Mammary epithelial cell (primary cell): ENCODE measurements at regions of chr3 and their contacts with region 1.

Region 1: DNA sequence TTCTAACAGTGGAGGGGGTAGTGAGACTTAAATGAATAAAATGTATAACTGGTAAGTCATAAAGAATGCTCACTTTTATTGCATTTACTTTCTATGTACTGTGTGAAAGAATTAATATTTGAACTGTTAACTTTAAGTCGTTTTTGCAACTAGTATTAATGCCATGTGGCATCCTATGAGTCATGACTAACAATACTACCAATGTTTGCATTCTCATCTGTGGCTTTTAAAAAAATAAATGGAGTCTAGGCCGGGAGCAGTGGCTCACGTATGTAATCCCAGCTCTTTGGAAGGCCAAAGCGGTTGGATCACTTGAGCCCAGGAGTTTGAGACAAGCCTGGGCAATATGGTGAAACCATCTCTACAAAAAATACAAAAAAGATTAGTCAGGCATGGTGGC is 5.2 kb downstream of the C3orf49 start:
- DNase-seq: peak; percentile 96
- H3K4me3 ChIP-seq: no peak overlapping the region
- H3K27ac ChIP-seq: peak overlapping the region; percentile 84
- H3K4me1 ChIP-seq: peaks cover 18% of the 10 kb centered on the region
- H3K27me3 ChIP-seq: no peaks in the 10 kb centered on the region
- CTCF ChIP-seq: no peak

Region 2: DNA sequence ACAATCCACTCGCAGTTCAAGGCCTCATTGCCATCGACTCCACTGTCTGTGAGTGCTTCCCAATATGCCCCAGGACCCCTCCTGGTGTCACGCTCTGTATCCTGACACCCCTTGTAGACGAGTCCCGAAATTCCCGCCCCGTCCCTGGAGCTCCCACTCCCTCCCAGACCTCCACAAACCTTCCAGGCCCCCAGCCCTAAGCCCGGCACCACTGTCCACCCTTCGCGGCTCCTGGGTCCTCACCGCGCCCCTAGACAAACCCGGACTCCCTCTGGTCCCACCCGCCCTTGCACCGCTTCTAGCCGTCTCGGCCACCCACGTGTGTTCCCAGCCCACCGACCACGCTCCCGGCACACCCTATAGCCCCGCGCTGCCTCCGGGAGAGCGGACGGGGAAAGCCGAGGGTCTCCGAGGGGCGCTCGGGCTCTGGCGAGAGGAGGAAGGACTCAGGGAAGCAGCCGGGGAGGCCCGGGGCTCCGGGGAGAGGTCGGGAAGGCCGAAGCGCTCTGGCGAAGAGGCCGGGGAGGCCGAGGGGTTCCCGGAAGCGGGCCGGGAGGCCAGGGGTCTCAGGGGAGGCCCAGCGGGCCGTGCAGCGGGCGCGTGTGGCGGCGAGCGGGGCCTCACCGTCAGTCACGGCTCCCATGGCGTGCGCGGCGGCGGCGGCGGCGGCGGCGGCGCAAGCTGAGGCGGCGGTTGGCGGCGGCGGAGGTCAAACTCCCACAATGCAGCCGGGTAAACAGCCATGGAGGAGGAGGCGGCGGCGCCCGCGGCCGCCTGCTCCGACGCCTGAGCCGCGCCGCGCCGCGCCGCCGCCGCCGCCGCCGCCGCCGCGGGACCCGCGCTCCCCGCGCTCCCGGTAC is 39.1 kb after region 1 on chr3 and contains the starts of genes ATXN7 and THOC7:
- CTCF ChIA-PET with region 1: no interaction called
- dilution Hi-C with region 1: no loop called
- in situ Hi-C with region 1: no loop called
- intact Hi-C with region 1: loop called (anchors 5 kb)
- DNase-seq: peak; percentile 64
- H3K4me3 ChIP-seq: peak within 1 kb of the TSS; percentile 92 to 99 (median 94)
- H3K27ac ChIP-seq: peak within 1 kb of the TSS; percentile 84
- H3K4me1 ChIP-seq: peaks cover 12% of the 10 kb centered on the region
- H3K27me3 ChIP-seq: no peaks in the 10 kb centered on the region
- CTCF ChIP-seq: no peak
- total RNA-seq, gene ATXN7: 21.2 to 30.5 TPM
- total RNA-seq, gene THOC7: 34.5 to 87.5 TPM